Activated T-helper 2 cell treated with anti-CD3 and anti-CD28 coated beads, Interferon-gamma antibody, Interleukin-2, Interleukin-4, amounts not matched to agents 10 μg/mL and 5 μg/mL and 100 μg/mL, durations not matched to agents 14 hours and 24 hours and 36 hours (primary cell): ENCODE measurements at regions of chr6 and their contacts with region 1.

Region 1: GRCh38 chr6:14857501-14857900 is 388.4 kb upstream of the JARID2 start:
- DNase-seq: peak; percentile 18
- H3K4me3 Mint-ChIP-seq: peak overlapping the region; percentile 19
- H3K27ac Mint-ChIP-seq: peak overlapping the region; percentile 92
- H3K4me1 Mint-ChIP-seq: peaks cover 46% of the 10 kb centered on the region
- H3K27me3 Mint-ChIP-seq: no peaks in the 10 kb centered on the region

Region 2: GRCh38 chr6:14816116-14816859 is 41.2 kb before region 1 on chr6:
- intact Hi-C with region 1: loop called (anchors 1 kb)
- DNase-seq: no peak
- H3K4me3 Mint-ChIP-seq: no peak overlapping the region
- H3K27ac Mint-ChIP-seq: no peak overlapping the region
- H3K4me1 Mint-ChIP-seq: peaks cover 17% of the 10 kb centered on the region
- H3K27me3 Mint-ChIP-seq: no peaks in the 10 kb centered on the region

Region 3: GRCh38 chr6:15044146-15044882 is 186.8 kb after region 1 on chr6:
- intact Hi-C with region 1: no loop called
- DNase-seq: no peak
- H3K4me3 Mint-ChIP-seq: no peak overlapping the region
- H3K27ac Mint-ChIP-seq: no peak overlapping the region
- H3K4me1 Mint-ChIP-seq: peaks cover 3% of the 10 kb centered on the region
- H3K27me3 Mint-ChIP-seq: no peaks in the 10 kb centered on the region

Region 4: GRCh38 chr6:15148356-15148946 is 290.9 kb after region 1 on chr6:
- intact Hi-C with region 1: no loop called
- DNase-seq: no peak
- H3K4me3 Mint-ChIP-seq: no peak overlapping the region
- H3K27ac Mint-ChIP-seq: no peak overlapping the region
- H3K4me1 Mint-ChIP-seq: peaks cover 2% of the 10 kb centered on the region
- H3K27me3 Mint-ChIP-seq: no peaks in the 10 kb centered on the region

Region 5: GRCh38 chr6:15628499-15629131 is 771.1 kb after region 1 on chr6:
- intact Hi-C with region 1: loop called (anchors 5 kb)
- DNase-seq: no peak
- H3K4me3 Mint-ChIP-seq: peak overlapping the region; percentile 24
- H3K27ac Mint-ChIP-seq: no peak overlapping the region
- H3K4me1 Mint-ChIP-seq: peaks cover 57% of the 10 kb centered on the region
- H3K27me3 Mint-ChIP-seq: no peaks in the 10 kb centered on the region